CD14-positive monocyte (primary cell): ENCODE measurements at regions of chr4 and their contacts with region 1.

Region 1: DNA sequence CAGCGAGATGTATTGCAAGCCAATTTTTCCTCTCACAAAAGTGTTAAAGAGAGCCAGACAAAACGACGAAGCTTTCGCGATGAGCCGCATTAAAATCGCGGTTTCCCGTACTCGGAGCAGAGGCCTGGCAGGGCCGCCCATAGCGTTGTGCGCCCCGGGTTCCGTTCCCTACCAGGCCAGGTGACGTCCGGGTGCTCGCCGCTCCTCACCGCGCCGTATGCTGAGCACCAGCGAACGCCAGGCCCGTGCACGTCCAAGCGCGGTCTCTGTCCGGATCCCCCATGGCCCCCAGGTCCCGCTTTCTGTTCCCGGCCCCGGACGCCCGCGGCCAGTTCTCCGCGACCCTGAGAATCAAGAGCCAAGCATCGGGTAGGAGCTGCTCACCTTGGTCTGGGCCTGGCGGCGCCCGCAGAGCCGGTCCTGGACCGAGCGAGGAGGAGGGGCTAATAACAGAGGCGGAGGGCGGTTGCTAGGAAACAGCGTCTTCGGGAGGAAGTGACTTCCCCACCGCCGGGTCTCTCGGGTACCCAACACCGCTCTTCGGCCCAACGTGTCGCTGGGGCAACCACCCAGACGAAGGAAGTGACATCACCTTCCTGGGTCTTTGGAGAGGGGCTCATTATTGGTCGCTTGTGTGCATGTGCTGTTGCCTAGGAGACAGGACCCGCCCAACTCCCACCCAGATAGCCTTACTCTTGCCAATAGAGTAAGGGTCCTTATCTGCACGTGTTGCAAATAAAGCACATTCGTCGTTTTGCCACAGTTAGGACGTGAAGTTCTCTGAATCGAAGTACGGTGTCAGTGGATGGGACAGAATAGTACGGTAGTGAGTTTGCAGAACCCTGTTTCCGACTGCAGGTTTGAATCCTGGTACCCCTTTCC is at the start of gene MAP9:
- DNase-seq: peak; percentile 36 to 76 (median 37)
- H3K4me3 ChIP-seq: peak within 1 kb of the TSS; percentile 19 to 71 (median 39)
- H3K4me3 Mint-ChIP-seq: peak within 1 kb of the TSS; percentile 73 to 90
- H3K27ac ChIP-seq: no peak within 1 kb of the TSS
- H3K27ac Mint-ChIP-seq: no peak within 1 kb of the TSS
- H3K4me1 ChIP-seq: peaks cover 11 to 13% of the 10 kb centered on the region in 2 donors
- H3K4me1 Mint-ChIP-seq: peaks cover 13% of the 10 kb centered on the region
- H3K27me3 ChIP-seq: peaks cover 18 to 27% of the 10 kb centered on the region in 2 donors
- H3K27me3 Mint-ChIP-seq: peaks cover 34 to 35% (median 35%) of the 10 kb centered on the region in 3 donors
- CTCF ChIP-seq: no peak
- polyA plus RNA-seq, gene MAP9: 0.01 TPM in 1 of 3 donors, not detected in the others

Region 2: DNA sequence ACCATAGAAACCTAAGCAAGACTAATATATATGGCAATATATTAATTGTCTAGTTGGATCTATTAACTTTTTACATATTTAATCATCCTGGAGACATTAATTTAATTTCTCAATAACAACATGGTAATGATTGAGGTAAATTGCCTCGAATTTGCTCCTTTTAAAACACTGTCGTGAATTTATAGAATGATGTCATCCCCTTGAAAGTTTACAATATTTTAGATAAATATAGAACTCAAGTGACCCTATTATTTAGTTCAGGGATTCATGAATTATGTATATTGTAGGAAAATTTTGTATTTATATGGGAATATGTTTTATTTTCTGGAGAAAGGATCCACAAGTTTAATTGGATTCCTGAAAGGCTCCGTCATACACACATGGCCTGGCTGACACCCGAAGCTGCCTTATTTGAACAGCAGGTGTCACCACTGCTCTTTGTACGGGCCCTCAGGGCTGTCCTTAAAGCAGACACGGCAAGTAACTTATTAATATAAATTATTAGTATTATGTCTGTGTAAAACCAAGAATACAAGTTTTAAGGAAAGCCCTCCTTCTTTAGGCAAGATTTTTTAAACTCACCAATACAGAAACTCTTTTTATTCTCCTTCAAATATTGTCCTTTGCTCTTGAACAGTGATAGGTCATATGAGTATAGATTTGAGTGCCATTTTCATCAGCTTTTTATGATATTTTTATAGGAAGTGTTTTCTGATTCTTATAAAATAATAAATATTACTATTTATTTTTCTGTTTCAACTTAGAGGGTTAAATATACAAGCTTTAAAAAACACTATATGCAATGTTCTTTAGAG is 824.5 kb before region 1 on chr4:
- intact Hi-C with region 1: loop called in 1 of 2 experiments (anchors 10 kb)
- DNase-seq: peak; percentile 59 to 69 (median 66)
- H3K4me3 ChIP-seq: no peak overlapping the region
- H3K4me3 Mint-ChIP-seq: no peak overlapping the region
- H3K27ac ChIP-seq: no peak overlapping the region
- H3K27ac Mint-ChIP-seq: no peak overlapping the region
- H3K4me1 ChIP-seq: peaks cover 17 to 21% of the 10 kb centered on the region in 2 donors
- H3K4me1 Mint-ChIP-seq: peaks cover 13% of the 10 kb centered on the region
- H3K27me3 ChIP-seq: no peaks in the 10 kb centered on the region
- H3K27me3 Mint-ChIP-seq: peaks cover 1 to 5% (median 2%) of the 10 kb centered on the region in 3 donors
- CTCF ChIP-seq: peak; percentile 85